Activated B cell treated with CpG ODN at 0.5 μM for 24 hours (primary cell): ENCODE measurements at regions of chr4 and their contacts with region 1.

Region 1: DNA sequence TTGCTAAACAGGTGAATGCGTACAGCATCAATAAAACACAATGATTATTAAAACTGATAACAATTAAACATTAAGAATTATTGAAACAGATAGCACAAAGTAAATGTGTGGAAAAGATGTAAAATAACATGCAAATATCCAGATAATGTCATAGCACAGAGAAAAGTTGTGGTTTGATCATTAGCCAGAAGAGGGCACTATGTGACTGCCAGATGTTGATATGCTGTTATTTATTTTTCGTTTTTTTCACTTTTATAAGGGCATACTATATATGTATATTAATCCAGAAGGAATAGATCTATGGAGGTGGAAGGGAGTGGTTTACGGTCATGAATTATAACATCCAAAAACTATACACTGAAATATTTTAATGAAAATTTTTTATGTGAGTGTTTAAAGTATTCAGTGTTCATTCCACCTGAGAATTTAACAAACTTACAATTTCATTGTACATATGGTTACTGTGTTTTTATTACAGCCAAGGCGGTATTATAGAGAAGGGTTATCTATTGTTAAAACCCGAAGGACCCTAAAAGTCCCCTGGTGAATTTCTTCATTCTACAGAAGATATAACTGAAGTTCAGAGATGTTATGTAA is 211.9 kb upstream of the UGT8 start:
- DNase-seq: no peak
- ATAC-seq: peak; percentile 40
- H3K4me3 Mint-ChIP-seq: no peak overlapping the region
- H3K27ac Mint-ChIP-seq: no peak overlapping the region
- H3K4me1 Mint-ChIP-seq: no peaks in the 10 kb centered on the region
- H3K27me3 Mint-ChIP-seq: peaks cover 16% of the 10 kb centered on the region
- CTCF ChIP-seq: peak; percentile 80

Region 2: DNA sequence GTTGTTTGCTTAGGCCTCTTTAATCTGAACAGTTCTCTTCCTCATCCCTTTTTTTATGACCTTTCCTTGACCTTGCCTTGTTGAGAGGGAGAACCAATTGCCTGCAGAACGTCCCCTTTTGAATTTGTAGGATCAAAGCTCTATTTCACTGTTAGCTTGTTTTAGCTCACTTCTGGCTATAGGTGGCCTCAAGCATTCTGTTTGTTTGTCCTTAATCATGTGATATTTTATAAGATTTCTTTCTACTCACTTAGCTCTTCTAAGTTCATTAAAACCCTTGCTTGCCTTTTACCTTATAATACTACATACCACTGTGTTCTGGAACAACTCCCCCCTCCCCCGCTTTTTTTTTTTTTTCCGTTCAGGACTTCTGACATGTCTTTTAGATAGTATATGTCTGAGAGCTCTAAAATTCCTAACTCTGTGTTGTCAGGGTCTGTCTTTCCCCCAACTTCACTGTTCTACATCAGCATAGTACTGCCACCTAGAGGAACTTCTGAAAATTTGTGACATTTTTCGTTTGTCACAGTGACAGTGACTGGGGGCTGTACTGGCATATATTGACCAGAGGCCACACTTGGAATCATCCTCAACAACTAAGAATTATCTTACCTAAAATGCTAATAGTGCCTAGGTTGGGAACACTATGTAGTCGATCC is 1621.3 kb before region 1 on chr4:
- CTCF ChIA-PET with region 1: no interaction called
- POLR2A ChIA-PET with region 1: no interaction called
- intact Hi-C with region 1: loop called (anchors 10 kb)
- DNase-seq: no peak
- ATAC-seq: peak; percentile 54
- H3K4me3 Mint-ChIP-seq: no peak overlapping the region
- H3K27ac Mint-ChIP-seq: no peak overlapping the region
- H3K4me1 Mint-ChIP-seq: peaks cover 3% of the 10 kb centered on the region
- H3K27me3 Mint-ChIP-seq: peaks cover 4% of the 10 kb centered on the region
- CTCF ChIP-seq: no peak

Region 3: DNA sequence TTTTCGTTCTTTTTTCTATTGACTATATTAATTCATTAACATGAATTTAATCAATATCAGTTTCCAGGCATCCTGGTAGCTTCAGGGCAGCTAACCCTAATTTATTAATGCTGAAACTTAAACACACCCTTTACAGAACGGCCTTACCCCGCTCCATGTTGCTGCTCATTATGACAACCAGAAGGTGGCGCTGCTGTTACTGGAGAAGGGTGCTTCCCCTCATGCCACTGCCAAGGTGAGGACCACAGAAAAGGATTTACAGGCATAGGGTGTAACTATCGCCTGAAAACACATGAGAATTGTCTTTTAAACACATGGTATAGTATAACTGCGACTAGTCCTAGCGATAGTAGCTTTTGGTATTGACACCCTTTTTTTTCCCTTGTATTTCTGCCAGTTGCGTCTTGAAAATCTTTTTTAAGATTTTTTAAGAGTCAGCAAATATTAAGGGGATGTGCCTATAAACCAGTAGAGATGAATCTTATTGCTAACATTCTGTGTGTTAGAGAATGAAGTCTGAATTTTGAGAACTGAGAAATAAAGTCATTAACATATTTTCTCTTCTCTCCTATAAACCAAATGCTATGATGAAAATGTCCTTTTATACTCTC is 1108.3 kb before region 1 on chr4:
- CTCF ChIA-PET with region 1: interaction called, 3 read pairs
- POLR2A ChIA-PET with region 1: no interaction called
- intact Hi-C with region 1: loop called (anchors 2 kb)
- DNase-seq: no peak
- ATAC-seq: peak; percentile 72
- H3K4me3 Mint-ChIP-seq: no peak overlapping the region
- H3K27ac Mint-ChIP-seq: no peak overlapping the region
- H3K4me1 Mint-ChIP-seq: no peaks in the 10 kb centered on the region
- H3K27me3 Mint-ChIP-seq: no peaks in the 10 kb centered on the region
- CTCF ChIP-seq: no peak

Region 4: GRCh38 chr4:113952452-113953029 is 434.2 kb before region 1 on chr4:
- CTCF ChIA-PET with region 1: no interaction called
- POLR2A ChIA-PET with region 1: no interaction called
- intact Hi-C with region 1: loop called (anchors 1 kb)
- DNase-seq: no peak
- ATAC-seq: peak; percentile 71
- H3K4me3 Mint-ChIP-seq: no peak overlapping the region
- H3K27ac Mint-ChIP-seq: no peak overlapping the region
- H3K4me1 Mint-ChIP-seq: peaks cover 2% of the 10 kb centered on the region
- H3K27me3 Mint-ChIP-seq: peaks cover 16% of the 10 kb centered on the region
- CTCF ChIP-seq: peak; percentile 55

Region 5: GRCh38 chr4:114694770-114695169 is 308.0 kb after region 1 on chr4:
- CTCF ChIA-PET with region 1: interaction called, 16 read pairs
- POLR2A ChIA-PET with region 1: interaction called, 4 read pairs
- intact Hi-C with region 1: loop called (anchors 1 kb)
- DNase-seq: no peak
- ATAC-seq: no peak
- H3K4me3 Mint-ChIP-seq: no peak overlapping the region
- H3K27ac Mint-ChIP-seq: no peak overlapping the region
- H3K4me1 Mint-ChIP-seq: peaks cover 14% of the 10 kb centered on the region
- H3K27me3 Mint-ChIP-seq: no peaks in the 10 kb centered on the region
- CTCF ChIP-seq: peak; percentile 43

Region 6: GRCh38 chr4:114807759-114808404 is 421.1 kb after region 1 on chr4:
- CTCF ChIA-PET with region 1: interaction called, 10 read pairs
- POLR2A ChIA-PET with region 1: no interaction called
- intact Hi-C with region 1: loop called (anchors 1 kb)
- DNase-seq: peak; percentile 15
- ATAC-seq: peak; percentile 87
- H3K4me3 Mint-ChIP-seq: no peak overlapping the region
- H3K27ac Mint-ChIP-seq: no peak overlapping the region
- H3K4me1 Mint-ChIP-seq: no peaks in the 10 kb centered on the region
- H3K27me3 Mint-ChIP-seq: no peaks in the 10 kb centered on the region
- CTCF ChIP-seq: no peak